Heart right ventricle (tissue), 16 donors: ENCODE measurements at regions of chr14 and their contacts with region 1.

Region 1: GRCh38 chr14:35046048-35046741 is at the start of gene FAM177A1:
- DNase-seq: peak; percentile 98 to 99
- ATAC-seq: peak; percentile 97 to 99 (median 98)
- H3K4me3 ChIP-seq: peak within 1 kb of the TSS; percentile 66 to 96 (median 81)
- H3K27ac ChIP-seq: peak within 1 kb of the TSS; percentile 92 to 99 (median 96)
- H3K4me1 ChIP-seq: peaks cover 4 to 53% (median 33%) of the 10 kb centered on the region in 9 donors
- H3K27me3 ChIP-seq: no peaks in the 10 kb centered on the region
- CTCF ChIP-seq: no peak
- total RNA-seq, gene FAM177A1: 68.1 to 122 (median 104) TPM

Region 2: GRCh38 chr14:34875031-34875922 is 170.9 kb before region 1 on chr14 and contains the start of gene BAZ1A:
- intact Hi-C with region 1: loop called in 1 of 10 experiments (anchors 10 kb)
- DNase-seq: peak; percentile 59 to 65
- ATAC-seq: peak; percentile 22 to 71 (median 56)
- H3K4me3 ChIP-seq: peak within 1 kb of the TSS; percentile 73 to 96 (median 81)
- H3K27ac ChIP-seq: peak within 1 kb of the TSS; percentile 93 to 100 (median 98)
- H3K4me1 ChIP-seq: peaks cover 0 to 36% (median 7%) of the 10 kb centered on the region in 9 donors
- H3K27me3 ChIP-seq: no peaks in the 10 kb centered on the region
- CTCF ChIP-seq: peak in 5 of 9 donors; percentile 5 to 44 (median 41)
- total RNA-seq, gene BAZ1A: 3.8 to 14.5 (median 4.5) TPM

Region 3: DNA sequence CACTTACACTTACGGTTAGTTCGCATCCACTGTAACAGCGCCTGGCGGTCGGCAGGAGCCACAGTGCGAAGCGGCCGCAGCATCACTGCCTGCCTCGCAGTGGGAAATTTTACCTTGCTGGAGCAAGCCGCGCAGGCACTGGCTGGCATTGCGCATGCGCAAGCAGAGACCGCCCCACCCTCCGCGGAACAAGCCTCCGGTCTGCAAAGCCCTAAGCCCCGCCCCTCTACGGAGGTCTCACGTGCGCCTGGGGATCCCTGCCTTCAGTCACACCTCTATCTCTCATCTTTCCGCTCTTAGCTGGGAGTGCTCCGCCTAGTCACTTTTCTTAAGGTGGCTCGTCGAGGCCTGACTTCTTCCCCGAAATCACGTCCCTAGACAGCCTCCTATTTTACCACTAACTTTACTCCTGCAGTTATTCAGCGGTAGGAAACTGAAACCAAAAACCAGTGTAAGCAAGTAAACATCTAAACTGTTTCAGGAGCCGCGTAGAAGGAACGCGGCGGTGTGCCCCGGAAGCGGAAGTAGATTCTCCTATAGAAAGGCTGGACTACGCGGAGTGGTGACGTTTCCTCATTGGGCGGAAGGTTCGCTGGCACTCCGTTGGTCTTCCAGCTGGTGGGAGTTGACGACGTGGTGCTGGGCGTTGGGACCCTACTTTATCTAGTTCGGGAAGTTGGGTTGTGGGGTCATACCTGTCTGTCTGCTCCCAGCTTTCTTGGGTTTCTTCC is 63.6 kb before region 1 on chr14 and contains the start of gene SRP54:
- intact Hi-C with region 1: loop called in 3 of 10 experiments (anchors 2 to 5 kb)
- DNase-seq: peak; percentile 98
- ATAC-seq: peak; percentile 96 to 98 (median 98)
- H3K4me3 ChIP-seq: peak within 1 kb of the TSS; percentile 49 to 94 (median 79)
- H3K27ac ChIP-seq: peak within 1 kb of the TSS; percentile 82 to 99 (median 96)
- H3K4me1 ChIP-seq: peaks cover 0 to 52% (median 38%) of the 10 kb centered on the region in 9 donors
- H3K27me3 ChIP-seq: no peaks in the 10 kb centered on the region
- CTCF ChIP-seq: peak in 1 of 9 donors; percentile 26
- total RNA-seq, gene SRP54: 29.2 to 38.2 (median 34.6) TPM

Region 4: GRCh38 chr14:35114034-35114433 is 67.8 kb after region 1 on chr14:
- intact Hi-C with region 1: loop called in 2 of 10 experiments (anchors 10 kb)
- DNase-seq: no peak
- ATAC-seq: no peak
- H3K4me3 ChIP-seq: no peak overlapping the region
- H3K27ac ChIP-seq: no peak overlapping the region
- H3K4me1 ChIP-seq: peaks cover 0 to 18% (median 2%) of the 10 kb centered on the region in 9 donors
- H3K27me3 ChIP-seq: no peaks in the 10 kb centered on the region
- CTCF ChIP-seq: no peak